Calu3 (cell line): ENCODE measurements at regions of chr14 and their contacts with region 1.

Region 1: GRCh38 chr14:75126679-75127473 is at the start of gene NEK9:
- DNase-seq: peak; percentile 85
- H3K4me3 Mint-ChIP-seq: peak within 1 kb of the TSS; percentile 82
- H3K27ac Mint-ChIP-seq: peak within 1 kb of the TSS; percentile 98
- H3K4me1 Mint-ChIP-seq: peaks cover 37% of the 10 kb centered on the region
- H3K27me3 Mint-ChIP-seq: no peaks in the 10 kb centered on the region
- CTCF ChIP-seq: no peak
- total RNA-seq, gene NEK9: 63.4 and 65.4 TPM in 2 replicates

Region 2: GRCh38 chr14:74979442-74980361 is 147.2 kb before region 1 on chr14:
- CTCF ChIA-PET with region 1: no interaction called
- intact Hi-C with region 1: no loop called
- DNase-seq: no peak
- H3K4me3 Mint-ChIP-seq: no peak overlapping the region
- H3K27ac Mint-ChIP-seq: no peak overlapping the region
- H3K4me1 Mint-ChIP-seq: no peaks in the 10 kb centered on the region
- H3K27me3 Mint-ChIP-seq: no peaks in the 10 kb centered on the region
- CTCF ChIP-seq: no peak

Region 3: GRCh38 chr14:75230140-75231045 is 103.5 kb after region 1 on chr14:
- CTCF ChIA-PET with region 1: no interaction called
- intact Hi-C with region 1: loop called (anchors 2 kb)
- DNase-seq: peak; percentile 68
- H3K4me3 Mint-ChIP-seq: no peak overlapping the region
- H3K27ac Mint-ChIP-seq: peak overlapping the region; percentile 96
- H3K4me1 Mint-ChIP-seq: peaks cover 65% of the 10 kb centered on the region
- H3K27me3 Mint-ChIP-seq: no peaks in the 10 kb centered on the region
- CTCF ChIP-seq: peak; percentile 33

Region 4: DNA sequence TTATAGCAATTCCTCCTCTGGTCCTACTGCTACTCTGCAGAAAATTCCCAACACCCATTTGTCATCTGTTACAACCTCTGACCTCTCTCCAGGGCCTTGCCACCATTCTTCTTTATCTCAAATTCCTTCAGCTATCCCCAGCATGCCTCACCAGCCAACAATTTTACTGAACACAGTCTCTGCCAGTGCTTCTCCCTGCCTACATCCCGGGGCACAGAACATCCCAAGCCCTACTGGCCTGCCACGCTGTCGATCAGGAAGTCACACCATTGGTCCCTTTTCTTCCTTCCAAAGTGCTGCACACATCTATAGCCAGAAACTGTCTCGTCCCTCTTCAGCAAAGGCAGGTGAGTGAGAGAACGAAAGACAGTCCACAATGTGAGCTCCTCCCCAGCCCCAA is 656.3 kb after region 1 on chr14:
- CTCF ChIA-PET with region 1: no interaction called
- intact Hi-C with region 1: no loop called
- DNase-seq: no peak
- H3K4me3 Mint-ChIP-seq: no peak overlapping the region
- H3K27ac Mint-ChIP-seq: no peak overlapping the region
- H3K4me1 Mint-ChIP-seq: no peaks in the 10 kb centered on the region
- H3K27me3 Mint-ChIP-seq: no peaks in the 10 kb centered on the region
- CTCF ChIP-seq: no peak